ENCODE measurements at regions of chr2 and their contacts with region 1.

Region 1: DNA sequence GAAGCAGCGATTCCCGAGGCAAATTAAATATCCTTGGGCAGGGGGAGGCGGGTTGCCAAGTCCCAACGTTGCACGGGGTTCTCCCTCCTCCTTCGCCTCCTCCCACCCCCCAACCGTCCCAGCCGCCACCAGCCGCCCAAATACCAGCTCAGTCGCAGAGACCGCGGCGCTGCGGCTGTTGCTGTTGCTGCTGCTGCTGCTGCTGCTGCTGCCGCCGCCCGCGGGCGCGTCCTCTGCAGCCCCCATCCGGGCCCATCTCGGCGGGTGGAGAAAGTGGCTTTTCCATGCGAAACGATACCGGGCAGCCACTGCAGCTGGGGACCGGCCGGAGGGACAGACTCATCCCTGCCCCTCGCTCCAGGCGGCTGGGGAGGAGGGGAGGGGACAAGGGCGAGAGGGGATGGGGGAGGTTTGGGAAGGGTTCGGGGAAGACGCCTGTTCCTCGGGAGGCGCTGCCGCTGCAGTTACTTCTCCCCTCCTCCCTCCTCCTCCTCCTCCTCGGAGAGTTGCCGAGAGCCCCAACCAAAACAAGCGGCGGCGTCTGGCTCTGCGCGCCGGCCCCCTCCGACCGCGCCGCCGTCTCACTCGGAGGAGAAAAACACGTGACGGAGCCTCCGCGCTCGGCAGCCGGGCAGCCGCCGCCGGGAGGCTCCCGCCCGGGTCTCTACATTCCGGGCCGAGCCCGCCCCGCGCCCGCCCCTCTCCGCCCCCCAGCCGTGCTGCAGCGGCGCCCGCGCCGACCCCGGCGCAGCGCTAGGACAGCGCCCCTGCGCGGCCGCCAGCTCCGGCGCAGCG is at the start of gene IRS1:
- DNase-seq: peak; percentile 74 to 89 (median 81)
- ATAC-seq: peak in 3 of 4 donors; percentile 28 to 66 (median 54)
- H3K4me3 ChIP-seq: peak within 1 kb of the TSS; percentile 45 to 97 (median 82)
- H3K27ac ChIP-seq: peak within 1 kb of the TSS; percentile 69 to 98 (median 94)
- H3K4me1 ChIP-seq: peaks cover 0 to 63% (median 36%) of the 10 kb centered on the region in 12 donors
- H3K27me3 ChIP-seq: peaks cover 0 to 31% (median 0%) of the 10 kb centered on the region in 9 donors
- CTCF ChIP-seq: peak in 7 of 12 donors; percentile 25 to 68 (median 39)
- POLR2A ChIP-seq: peak in 1 of 2 donors; percentile 53
- total RNA-seq, gene IRS1: 13.4 to 45.8 (median 16.8) TPM

Region 2: GRCh38 chr2:226030788-226031646 is 768.4 kb before region 1 on chr2:
- intact Hi-C with region 1: loop called in 3 of 10 experiments (anchors 2 to 10 kb)
- DNase-seq: peak; percentile 53 to 82 (median 64)
- ATAC-seq: peak; percentile 84 to 97 (median 96)
- H3K4me3 ChIP-seq: peak overlapping the region; percentile 8 to 73 (median 56)
- H3K27ac ChIP-seq: peak overlapping the region in 10 of 12 donors; percentile 38 to 72 (median 58)
- H3K4me1 ChIP-seq: peaks cover 0 to 16% (median 0%) of the 10 kb centered on the region in 12 donors
- H3K27me3 ChIP-seq: no peaks in the 10 kb centered on the region
- CTCF ChIP-seq: no peak
- POLR2A ChIP-seq: no peak

Region 3: GRCh38 chr2:226215902-226216503 is 583.4 kb before region 1 on chr2:
- intact Hi-C with region 1: loop called (anchors 1 to 10 kb)
- DNase-seq: peak in 4 of 5 donors; percentile 35 to 57 (median 42)
- ATAC-seq: peak; percentile 37 to 82 (median 80)
- H3K4me3 ChIP-seq: no peak overlapping the region
- H3K27ac ChIP-seq: no peak overlapping the region
- H3K4me1 ChIP-seq: peaks cover 0 to 14% (median 7%) of the 10 kb centered on the region in 12 donors
- H3K27me3 ChIP-seq: no peaks in the 10 kb centered on the region
- CTCF ChIP-seq: peak; percentile 46 to 74 (median 63)
- POLR2A ChIP-seq: no peak

Region 4: DNA sequence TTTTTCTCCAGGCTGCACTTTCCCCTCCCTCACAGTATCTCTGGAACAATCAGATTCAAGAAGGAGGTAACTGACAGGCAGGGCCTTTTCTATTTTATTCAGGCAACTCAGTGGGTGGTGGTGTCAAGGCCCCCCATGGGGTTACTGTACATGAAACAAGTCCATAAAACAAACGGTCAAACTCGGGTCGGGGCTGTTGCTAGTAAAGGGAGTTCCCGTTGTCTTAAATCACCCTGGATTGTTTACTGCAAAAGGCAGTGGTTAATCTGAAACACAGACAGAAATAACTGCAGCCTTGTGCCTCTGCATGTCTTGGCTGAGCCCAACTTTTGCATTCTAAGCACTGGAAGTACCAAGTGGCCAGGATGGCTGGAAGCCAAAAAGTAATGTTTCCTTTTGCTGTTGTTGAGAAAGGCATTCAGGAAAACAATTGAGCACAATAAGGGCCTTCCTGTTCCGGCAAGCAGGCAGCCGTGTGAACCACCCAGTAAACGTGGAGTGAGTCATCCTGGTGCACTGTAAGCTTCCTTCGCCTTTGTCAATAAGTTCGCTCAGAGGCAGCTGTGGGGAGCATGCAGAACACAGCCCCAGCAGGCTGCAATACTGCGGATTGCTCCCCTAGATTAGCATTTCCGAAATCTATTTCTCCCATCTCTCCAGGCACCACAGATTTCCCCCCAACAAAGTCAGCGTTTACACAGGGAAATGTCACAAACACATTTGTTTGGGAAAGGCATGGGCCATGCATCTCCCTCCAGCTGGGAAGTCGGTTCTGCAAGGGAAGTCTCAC is 149.3 kb before region 1 on chr2:
- intact Hi-C with region 1: loop called in 9 of 10 experiments (anchors 5 to 10 kb)
- DNase-seq: peak in 4 of 5 donors; percentile 66 to 80 (median 76)
- ATAC-seq: peak; percentile 87 to 98 (median 96)
- H3K4me3 ChIP-seq: no peak overlapping the region
- H3K27ac ChIP-seq: peak overlapping the region; percentile 34 to 86 (median 78)
- H3K4me1 ChIP-seq: peaks cover 0 to 33% (median 24%) of the 10 kb centered on the region in 12 donors
- H3K27me3 ChIP-seq: no peaks in the 10 kb centered on the region
- CTCF ChIP-seq: no peak
- POLR2A ChIP-seq: no peak

Region 5: DNA sequence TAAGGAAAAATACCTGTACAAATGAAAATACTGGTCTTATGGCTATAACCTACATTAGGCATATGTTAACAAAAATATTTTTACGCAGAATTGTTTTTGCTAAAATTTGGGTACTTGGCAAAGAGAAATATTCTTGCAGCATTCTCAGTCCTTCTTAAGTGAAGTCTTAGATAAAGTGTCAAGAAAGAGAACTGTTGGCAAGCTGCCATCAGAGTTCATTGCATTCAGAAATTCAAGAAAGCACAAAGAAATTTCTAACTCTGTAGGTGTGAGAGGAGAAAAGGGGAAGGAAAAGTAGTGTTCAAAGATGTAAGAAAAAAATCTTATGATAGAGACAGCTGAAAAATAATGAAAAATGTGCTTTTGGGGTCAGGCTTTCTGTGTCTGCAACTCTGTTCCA is 86.4 kb before region 1 on chr2:
- intact Hi-C with region 1: no loop called
- DNase-seq: no peak
- ATAC-seq: no peak
- H3K4me3 ChIP-seq: no peak overlapping the region
- H3K27ac ChIP-seq: no peak overlapping the region
- H3K4me1 ChIP-seq: peaks cover 0 to 4% (median 0%) of the 10 kb centered on the region in 12 donors
- H3K27me3 ChIP-seq: no peaks in the 10 kb centered on the region
- CTCF ChIP-seq: no peak
- POLR2A ChIP-seq: no peak

Region 6: DNA sequence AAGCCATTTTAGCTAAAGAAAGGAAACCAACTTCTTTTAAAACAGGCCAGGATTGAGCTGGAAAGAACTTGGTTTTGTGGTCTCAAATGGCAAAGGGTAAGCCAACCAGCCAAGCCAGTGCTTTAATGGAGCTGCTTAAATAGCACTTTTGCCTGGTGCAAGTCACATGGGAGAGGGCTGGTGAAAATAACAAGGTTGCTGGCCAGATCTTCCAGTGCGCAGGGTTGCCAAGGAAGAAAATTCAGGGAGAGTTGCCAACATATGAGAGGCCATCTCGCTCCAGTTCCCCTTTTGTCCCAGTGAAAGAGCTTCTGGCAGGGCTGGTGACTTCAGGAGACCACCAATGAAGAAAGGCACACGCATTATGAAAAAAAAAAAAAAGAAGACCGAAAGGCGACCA is 57.0 kb before region 1 on chr2:
- intact Hi-C with region 1: loop called in 4 of 10 experiments (anchors 5 to 10 kb)
- DNase-seq: peak in 4 of 5 donors; percentile 61 to 73 (median 64)
- ATAC-seq: peak; percentile 84 to 92 (median 89)
- H3K4me3 ChIP-seq: no peak overlapping the region
- H3K27ac ChIP-seq: peak overlapping the region; percentile 58 to 88 (median 74)
- H3K4me1 ChIP-seq: peaks cover 8 to 77% (median 41%) of the 10 kb centered on the region in 12 donors
- H3K27me3 ChIP-seq: no peaks in the 10 kb centered on the region
- CTCF ChIP-seq: no peak
- POLR2A ChIP-seq: no peak

Region 7: DNA sequence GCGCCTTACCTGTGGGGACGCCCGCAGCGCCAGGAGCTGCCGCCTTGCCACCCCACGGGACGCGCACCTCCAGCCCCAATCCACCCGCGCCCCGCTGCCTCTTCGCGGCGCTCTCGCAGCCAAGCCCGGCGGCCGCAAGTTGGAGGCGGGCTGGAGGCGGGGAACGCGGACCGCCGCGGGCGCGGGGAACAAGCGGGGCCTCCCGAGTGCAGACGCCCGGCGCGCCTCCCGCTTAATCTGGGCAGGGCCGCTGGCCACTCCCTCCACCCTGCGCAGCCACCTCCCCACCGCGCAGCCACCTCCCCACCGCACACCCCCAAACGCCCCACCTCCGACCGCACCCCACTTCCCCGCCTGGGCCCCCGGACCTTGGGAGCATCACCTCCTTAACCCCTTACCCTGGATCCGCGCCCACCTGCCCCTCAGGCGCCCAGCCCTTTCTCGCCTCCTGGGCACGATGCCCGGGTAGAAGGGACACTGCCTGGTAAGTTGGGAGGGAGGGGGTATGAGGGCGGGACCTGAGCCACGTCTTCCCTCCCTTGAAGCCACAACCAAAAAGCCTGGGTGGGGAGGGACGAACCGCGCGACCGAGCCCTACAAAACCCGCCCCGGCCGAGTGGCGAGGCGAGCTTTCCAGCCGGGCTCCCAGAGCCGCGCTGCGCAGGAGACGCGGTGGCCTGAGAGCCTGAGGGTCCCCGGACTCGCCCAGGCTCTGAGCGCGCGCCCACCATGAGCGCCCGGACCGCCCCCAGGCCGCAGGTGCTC is 364.8 kb after region 1 on chr2 and contains the starts of genes COL4A3 and COL4A4:
- intact Hi-C with region 1: no loop called
- DNase-seq: peak; percentile 58 to 78 (median 65)
- ATAC-seq: peak; percentile 84 to 93 (median 92)
- H3K4me3 ChIP-seq: peak within 1 kb of the TSS; percentile 56 to 85 (median 69)
- H3K27ac ChIP-seq: peak within 1 kb of the TSS; percentile 41 to 88 (median 76)
- H3K4me1 ChIP-seq: peaks cover 0 to 19% (median 5%) of the 10 kb centered on the region in 12 donors
- H3K27me3 ChIP-seq: peaks cover 0 to 35% (median 3%) of the 10 kb centered on the region in 9 donors
- CTCF ChIP-seq: no peak
- POLR2A ChIP-seq: peak in 1 of 2 donors; percentile 12
- total RNA-seq, gene COL4A3: 0.96 to 6.9 (median 1.9) TPM
- total RNA-seq, gene COL4A4: 1.6 to 9.9 (median 5.1) TPM